CD4-positive, alpha-beta T cell (primary cell): ENCODE measurements at regions of chr12 and their contacts with region 1.

Region 1: DNA sequence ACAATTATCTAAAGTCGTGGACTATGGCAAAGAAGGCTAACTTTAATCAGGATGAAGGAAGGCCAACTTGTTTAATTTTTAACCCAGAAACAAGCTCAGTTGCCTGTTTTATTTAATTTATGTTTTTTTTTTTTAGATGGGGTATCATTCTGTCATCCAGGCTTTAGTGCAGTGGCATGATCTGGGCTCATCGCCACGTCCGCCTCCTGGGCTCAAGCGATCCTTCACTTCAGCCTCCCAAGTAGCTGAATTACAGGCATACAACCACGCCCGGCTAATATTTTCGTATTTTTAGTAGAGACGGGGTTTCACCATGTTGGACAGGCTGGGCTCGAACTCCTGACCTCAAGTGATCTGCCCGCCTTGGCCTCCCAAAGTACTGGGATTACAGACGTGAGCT is 19.7 kb downstream of the NUDT4 start:
- DNase-seq: no peak
- ATAC-seq: no peak
- H3K4me3 ChIP-seq: no peak overlapping the region
- H3K4me3 Mint-ChIP-seq: no peak overlapping the region
- H3K27ac ChIP-seq: no peak overlapping the region
- H3K27ac Mint-ChIP-seq: no peak overlapping the region
- H3K4me1 ChIP-seq: no peaks in the 10 kb centered on the region
- H3K4me1 Mint-ChIP-seq: peaks cover 1% of the 10 kb centered on the region
- H3K27me3 ChIP-seq: no peaks in the 10 kb centered on the region
- H3K27me3 Mint-ChIP-seq: no peaks in the 10 kb centered on the region
- CTCF ChIP-seq: no peak

Region 2: DNA sequence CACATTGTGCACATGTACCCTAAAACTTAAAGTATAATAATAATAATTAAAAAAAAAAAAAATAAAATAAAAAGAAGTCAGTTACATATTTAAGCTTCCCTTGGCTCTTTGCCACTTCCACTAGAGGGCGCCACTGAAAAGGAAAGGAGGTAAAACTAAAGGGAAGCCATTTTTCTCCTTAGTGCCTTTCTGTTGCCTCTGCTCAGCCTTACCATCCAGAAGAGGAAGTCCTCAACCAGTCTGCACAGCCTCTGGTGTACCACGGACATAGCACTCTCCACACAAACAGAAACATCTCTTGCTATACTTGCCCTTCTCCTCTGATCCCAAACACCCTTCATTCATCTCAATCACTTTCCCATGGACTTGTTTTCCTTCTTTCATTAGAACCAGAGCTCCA is 299.3 kb before region 1 on chr12:
- CTCF ChIA-PET with region 1: interaction called, 4 read pairs
- POLR2A ChIA-PET with region 1: no interaction called
- intact Hi-C with region 1: loop called (anchors 5 kb)
- DNase-seq: peak; percentile 32 to 81 (median 60)
- ATAC-seq: peak; percentile 84
- H3K4me3 ChIP-seq: no peak overlapping the region
- H3K4me3 Mint-ChIP-seq: no peak overlapping the region
- H3K27ac ChIP-seq: no peak overlapping the region
- H3K27ac Mint-ChIP-seq: no peak overlapping the region
- H3K4me1 ChIP-seq: peaks cover 3% of the 10 kb centered on the region
- H3K4me1 Mint-ChIP-seq: peaks cover 5% of the 10 kb centered on the region
- H3K27me3 ChIP-seq: no peaks in the 10 kb centered on the region
- H3K27me3 Mint-ChIP-seq: peaks cover 6% of the 10 kb centered on the region
- CTCF ChIP-seq: peak; percentile 61